ENCODE measurements at regions of chr21 and their contacts with region 1.

Region 1: DNA sequence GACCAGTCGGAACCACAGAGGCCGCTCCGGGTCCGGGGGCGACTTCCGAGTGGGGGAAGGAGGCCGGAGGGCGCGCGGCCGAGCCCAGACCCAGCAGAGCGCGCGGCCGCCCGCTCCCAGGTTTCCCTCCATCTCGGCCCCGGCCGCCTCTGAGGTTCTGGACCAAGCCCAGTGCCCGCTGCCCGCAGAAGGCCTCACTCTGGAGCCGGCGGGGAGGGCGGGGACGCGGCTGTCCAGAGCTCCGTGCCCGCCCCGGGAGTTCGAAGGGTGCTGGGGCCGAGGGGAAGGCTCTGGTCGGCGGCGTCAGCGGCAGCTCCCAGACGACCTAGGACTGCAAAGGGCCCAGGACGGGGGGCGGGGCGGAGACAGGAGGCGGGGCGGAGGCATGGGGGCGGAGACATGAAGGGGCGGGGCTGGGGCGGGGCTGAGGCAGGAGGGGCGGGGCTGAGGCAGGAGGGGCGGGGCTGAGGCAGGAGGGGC is 48.0 kb upstream of the SLC19A1 start:
- DNase-seq: peak; percentile 91
- H3K4me3 ChIP-seq: peak overlapping the region; percentile 31 to 74 (median 48)
- H3K27ac ChIP-seq: peak overlapping the region in 6 of 8 donors; percentile 13 to 80 (median 60)
- H3K4me1 ChIP-seq: peaks cover 7 to 43% (median 25%) of the 10 kb centered on the region in 6 donors
- H3K27me3 ChIP-seq: peaks cover 0 to 37% (median 5%) of the 10 kb centered on the region in 7 donors
- CTCF ChIP-seq: no peak
- POLR2A ChIP-seq: no peak

Region 2: GRCh38 chr21:45643021-45643980 is 53.0 kb after region 1 on chr21 and contains the start of gene PCBP3:
- intact Hi-C with region 1: loop called (anchors 5 kb)
- DNase-seq: peak; percentile 99
- H3K4me3 ChIP-seq: peak within 1 kb of the TSS; percentile 36 to 78 (median 51)
- H3K27ac ChIP-seq: peak within 1 kb of the TSS; percentile 72 to 89 (median 85)
- H3K4me1 ChIP-seq: peaks cover 19 to 62% (median 43%) of the 10 kb centered on the region in 6 donors
- H3K27me3 ChIP-seq: peaks cover 0 to 33% (median 5%) of the 10 kb centered on the region in 7 donors
- CTCF ChIP-seq: no peak
- POLR2A ChIP-seq: peak in 1 of 3 donors; percentile 42
- total RNA-seq, gene PCBP3: 5.8 to 31.6 (median 18.4) TPM

Measured in spleen (tissue), 13 donors.